ENCODE measurements at regions of chr12 and their contacts with region 1.

Region 1: GRCh38 chr12:29552324-29552927 is 54.9 kb upstream of the OVCH1 start:
- DNase-seq: peak; percentile 36 to 60
- H3K4me3 ChIP-seq: no peak overlapping the region
- H3K27ac ChIP-seq: no peak overlapping the region
- H3K4me1 ChIP-seq: no peaks in the 10 kb centered on the region
- H3K27me3 ChIP-seq: no peaks in the 10 kb centered on the region
- CTCF ChIP-seq: peak; percentile 92

Region 2: DNA sequence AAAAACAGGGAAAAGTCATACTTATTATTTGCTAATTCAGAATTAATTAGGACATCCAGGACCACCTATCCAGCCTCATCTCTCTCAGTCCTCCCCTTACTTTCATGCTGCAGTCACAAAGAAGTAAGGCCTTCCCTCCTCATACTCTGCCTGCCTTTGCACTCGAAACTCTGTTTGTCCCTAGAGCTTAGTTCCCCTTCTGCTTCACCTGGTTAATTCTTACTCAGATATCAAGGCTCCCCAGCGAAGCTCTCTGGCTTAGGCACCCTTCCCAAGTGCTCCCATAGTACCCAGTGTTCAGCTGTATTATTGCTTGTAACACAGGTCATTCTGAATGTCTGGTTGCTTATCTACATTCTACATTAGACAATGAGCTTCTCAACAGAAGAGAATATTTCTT is 252.8 kb before region 1 on chr12:
- CTCF ChIA-PET with region 1: no interaction called
- POLR2A ChIA-PET with region 1: no interaction called
- intact Hi-C with region 1: no loop called
- DNase-seq: no peak
- H3K4me3 ChIP-seq: no peak overlapping the region
- H3K27ac ChIP-seq: no peak overlapping the region
- H3K4me1 ChIP-seq: no peaks in the 10 kb centered on the region
- H3K27me3 ChIP-seq: no peaks in the 10 kb centered on the region
- CTCF ChIP-seq: no peak

Region 3: GRCh38 chr12:29782285-29782870 is 230.0 kb after region 1 on chr12:
- CTCF ChIA-PET with region 1: no interaction called
- POLR2A ChIA-PET with region 1: no interaction called
- intact Hi-C with region 1: loop called (anchors 10 kb)
- DNase-seq: peak in 1 of 2 experiments; percentile 75
- H3K4me3 ChIP-seq: peak overlapping the region; percentile 53
- H3K27ac ChIP-seq: peak overlapping the region; percentile 59
- H3K4me1 ChIP-seq: peaks cover 18% of the 10 kb centered on the region
- H3K27me3 ChIP-seq: no peaks in the 10 kb centered on the region
- CTCF ChIP-seq: no peak

Measured in PC-9 (cell line).